Mammary epithelial cell (primary cell): ENCODE measurements at regions of chr1 and their contacts with region 1.

Region 1: GRCh38 chr1:212132025-212132424 is 96.5 kb downstream of the DTL start:
- DNase-seq: peak; percentile 30
- H3K4me3 ChIP-seq: no peak overlapping the region
- H3K27ac ChIP-seq: no peak overlapping the region
- H3K4me1 ChIP-seq: no peaks in the 10 kb centered on the region
- H3K27me3 ChIP-seq: no peaks in the 10 kb centered on the region
- CTCF ChIP-seq: no peak

Region 2: GRCh38 chr1:212040629-212041028 is 91.4 kb before region 1 on chr1:
- CTCF ChIA-PET with region 1: interaction called, 33 read pairs
- dilution Hi-C with region 1: no loop called
- in situ Hi-C with region 1: no loop called
- intact Hi-C with region 1: no loop called
- DNase-seq: peak; percentile 40
- H3K4me3 ChIP-seq: no peak overlapping the region
- H3K27ac ChIP-seq: peak overlapping the region; percentile 11
- H3K4me1 ChIP-seq: peaks cover 24% of the 10 kb centered on the region
- H3K27me3 ChIP-seq: no peaks in the 10 kb centered on the region
- CTCF ChIP-seq: no peak

Region 3: DNA sequence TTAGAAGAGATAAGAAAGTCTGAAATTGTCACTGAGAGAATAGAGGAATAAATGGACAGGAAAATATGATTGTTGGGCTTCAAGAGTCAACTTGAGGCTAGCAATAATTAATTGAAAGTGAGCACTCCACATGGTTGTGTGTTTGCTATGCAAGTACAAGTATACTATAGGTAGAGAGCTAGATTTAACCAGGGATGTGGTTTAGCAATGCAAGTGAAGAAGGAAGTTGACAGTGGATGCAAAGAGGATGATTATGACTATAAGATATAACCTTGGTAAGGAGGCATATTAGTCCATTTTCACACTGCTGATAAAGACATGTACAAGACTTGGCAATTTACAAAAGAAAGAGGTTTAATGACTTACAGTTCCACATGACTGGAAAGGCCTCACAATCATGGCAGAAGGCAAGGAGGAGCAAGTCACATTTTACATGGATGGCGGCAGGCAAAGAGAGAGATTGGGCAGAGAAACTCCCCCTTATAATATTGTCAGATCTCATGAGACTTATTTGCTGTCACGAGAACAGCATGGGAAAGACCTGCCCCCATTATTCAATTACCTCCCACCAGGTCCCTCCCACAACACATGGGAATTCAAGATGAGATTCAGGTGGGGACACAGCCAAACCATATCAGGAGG is 49.1 kb before region 1 on chr1:
- CTCF ChIA-PET with region 1: no interaction called
- dilution Hi-C with region 1: loop called (anchors 5 kb)
- in situ Hi-C with region 1: no loop called
- intact Hi-C with region 1: no loop called
- DNase-seq: no peak
- H3K4me3 ChIP-seq: no peak overlapping the region
- H3K27ac ChIP-seq: no peak overlapping the region
- H3K4me1 ChIP-seq: no peaks in the 10 kb centered on the region
- H3K27me3 ChIP-seq: no peaks in the 10 kb centered on the region
- CTCF ChIP-seq: no peak